A549 (cell line): ENCODE measurements at regions of chr1 and their contacts with region 1.

Region 1: GRCh38 chr1:12619792-12620487 is 1.9 kb upstream of the DHRS3 start:
- DNase-seq: peak; percentile 70 to 86
- ATAC-seq: peak; percentile 62 to 63
- H3K4me3 ChIP-seq: peak overlapping the region; percentile 93
- H3K27ac ChIP-seq: peak overlapping the region; percentile 99 to 100
- H3K4me1 ChIP-seq: peaks cover 22% of the 10 kb centered on the region
- CTCF ChIP-seq: peak; percentile 78
- EP300 ChIP-seq: no peak
- POLR2A ChIP-seq: no peak; the same call in 1 of the 2 replicates
- RAD21 ChIP-seq: peak; percentile 91 to 94

Region 2: GRCh38 chr1:12380326-12381249 is 239.4 kb before region 1 on chr1:
- CTCF ChIA-PET with region 1: no interaction called
- POLR2A ChIA-PET with region 1: interaction called, 10 read pairs
- DNase-seq: peak in 1 of 2 experiments; percentile 32
- ATAC-seq: peak; percentile 68 to 77
- H3K4me3 ChIP-seq: no peak overlapping the region
- H3K27ac ChIP-seq: peak overlapping the region; percentile 70 to 78
- H3K4me1 ChIP-seq: peaks cover 28% of the 10 kb centered on the region
- CTCF ChIP-seq: no peak
- EP300 ChIP-seq: no peak
- POLR2A ChIP-seq: no peak
- RAD21 ChIP-seq: no peak

Region 3: GRCh38 chr1:12467570-12468286 is 152.2 kb before region 1 on chr1:
- CTCF ChIA-PET with region 1: no interaction called
- POLR2A ChIA-PET with region 1: no interaction called
- DNase-seq: no peak
- ATAC-seq: no peak
- H3K4me3 ChIP-seq: no peak overlapping the region
- H3K27ac ChIP-seq: no peak overlapping the region
- H3K4me1 ChIP-seq: peaks cover 2% of the 10 kb centered on the region; the same call in 2 of the 3 replicates
- CTCF ChIP-seq: no peak
- EP300 ChIP-seq: no peak
- POLR2A ChIP-seq: no peak
- RAD21 ChIP-seq: no peak

Region 4: DNA sequence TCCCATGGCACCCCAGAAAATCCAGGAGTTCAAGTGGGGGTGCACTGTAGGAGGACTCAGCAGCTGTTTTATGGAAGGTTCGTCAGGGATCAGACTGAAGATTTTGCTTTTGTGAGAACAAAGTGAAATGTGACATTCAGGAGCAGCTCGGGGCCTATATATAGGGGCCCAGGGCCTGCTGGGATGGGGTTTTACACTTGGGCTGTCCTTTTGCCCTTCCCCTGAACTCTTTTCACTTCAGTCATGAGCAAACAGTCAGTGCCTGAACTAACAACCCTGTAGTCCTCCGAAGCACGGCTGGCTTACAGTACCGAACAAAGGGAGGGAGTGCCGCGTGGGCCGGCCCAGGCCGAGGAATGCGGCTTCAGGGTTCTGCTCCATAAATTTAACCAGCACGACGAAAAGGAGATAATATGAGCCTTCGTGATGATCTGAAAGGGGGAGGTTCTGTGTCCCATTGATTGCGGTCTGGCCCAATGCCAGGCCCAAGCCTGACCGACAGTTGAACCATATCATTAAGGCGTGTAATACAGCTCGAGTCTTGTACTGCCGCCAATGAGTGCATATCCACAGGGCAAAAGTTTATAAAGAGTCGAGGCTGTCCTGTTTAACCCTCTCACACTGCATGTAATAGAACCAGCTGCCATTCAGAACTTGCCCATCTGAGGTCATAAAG is 141.9 kb before region 1 on chr1:
- CTCF ChIA-PET with region 1: interaction called, 3 read pairs
- POLR2A ChIA-PET with region 1: interaction called, 45 read pairs
- DNase-seq: peak; percentile 49 to 97
- ATAC-seq: peak; percentile 87 to 95
- H3K4me3 ChIP-seq: no peak overlapping the region
- H3K27ac ChIP-seq: peak overlapping the region; percentile 92 to 93
- H3K4me1 ChIP-seq: peaks cover 72% of the 10 kb centered on the region
- CTCF ChIP-seq: no peak
- EP300 ChIP-seq: peak; percentile 75 to 96; a peak in 3 of 5 replicates
- POLR2A ChIP-seq: no peak
- RAD21 ChIP-seq: peak; percentile 28 to 66; a peak in 4 of 5 replicates

Region 5: DNA sequence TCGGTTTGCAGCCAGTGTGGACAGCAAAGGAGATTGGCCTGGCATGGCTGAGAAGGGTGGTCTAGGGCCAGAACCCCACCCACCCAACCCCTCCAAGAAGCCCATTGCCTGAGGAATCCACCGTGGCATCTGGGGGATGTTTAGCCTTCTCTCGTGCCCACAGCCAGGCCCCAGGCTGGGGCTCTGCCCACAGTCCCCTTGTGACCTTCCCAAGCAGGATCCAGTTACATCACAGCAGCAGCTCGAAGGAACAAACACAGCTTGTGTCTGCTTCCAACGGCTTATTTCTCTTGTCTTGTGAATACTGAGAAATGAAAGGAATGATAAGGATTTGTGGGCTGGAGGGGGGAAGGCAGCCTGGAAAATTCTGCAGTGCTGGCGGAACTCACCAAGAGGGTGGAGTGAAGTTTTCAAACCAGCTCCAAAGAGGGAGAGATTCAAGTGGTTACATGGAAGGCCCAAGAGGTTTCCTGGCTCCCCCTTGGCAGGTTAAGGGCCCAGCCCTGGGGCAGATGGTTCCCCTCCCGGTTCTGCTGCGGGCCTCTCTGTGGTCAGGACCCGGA is 63.5 kb before region 1 on chr1:
- CTCF ChIA-PET with region 1: no interaction called
- POLR2A ChIA-PET with region 1: no interaction called
- DNase-seq: peak in 1 of 2 experiments; percentile 73
- ATAC-seq: peak; percentile 47 to 73; a peak in 3 of 6 replicates
- H3K4me3 ChIP-seq: no peak overlapping the region
- H3K27ac ChIP-seq: peak overlapping the region; percentile 67 to 84
- H3K4me1 ChIP-seq: peaks cover 28% of the 10 kb centered on the region
- CTCF ChIP-seq: no peak
- EP300 ChIP-seq: no peak
- POLR2A ChIP-seq: no peak
- RAD21 ChIP-seq: no peak

Region 6: DNA sequence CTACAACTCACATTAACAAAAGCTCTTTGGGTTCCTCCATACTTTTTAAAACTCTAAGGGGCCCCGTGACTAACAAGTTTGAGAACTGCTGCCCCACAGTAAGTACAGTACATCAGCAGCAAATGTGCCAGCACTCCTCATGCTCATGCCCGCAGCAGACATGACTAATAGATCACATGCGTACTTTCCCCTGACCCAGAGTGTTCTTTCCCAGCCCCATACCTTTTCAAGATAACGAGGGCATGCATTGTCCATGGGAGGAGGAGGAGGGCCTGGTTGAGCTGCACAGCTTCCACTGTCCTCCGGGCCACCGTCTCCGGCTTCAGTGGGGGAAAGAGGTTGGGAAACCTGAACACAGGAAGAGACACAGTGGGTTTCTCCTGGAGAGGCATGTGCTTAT is 47.4 kb before region 1 on chr1:
- CTCF ChIA-PET with region 1: interaction called, 8 read pairs
- POLR2A ChIA-PET with region 1: interaction called, 30 read pairs
- DNase-seq: no peak
- ATAC-seq: peak in 1 of 2 experiments; percentile 14; a peak in 3 of 6 replicates
- H3K4me3 ChIP-seq: no peak overlapping the region
- H3K27ac ChIP-seq: peak overlapping the region; percentile 84 to 93
- H3K4me1 ChIP-seq: peaks cover 48% of the 10 kb centered on the region
- CTCF ChIP-seq: no peak
- EP300 ChIP-seq: no peak
- POLR2A ChIP-seq: no peak
- RAD21 ChIP-seq: no peak

Region 7: DNA sequence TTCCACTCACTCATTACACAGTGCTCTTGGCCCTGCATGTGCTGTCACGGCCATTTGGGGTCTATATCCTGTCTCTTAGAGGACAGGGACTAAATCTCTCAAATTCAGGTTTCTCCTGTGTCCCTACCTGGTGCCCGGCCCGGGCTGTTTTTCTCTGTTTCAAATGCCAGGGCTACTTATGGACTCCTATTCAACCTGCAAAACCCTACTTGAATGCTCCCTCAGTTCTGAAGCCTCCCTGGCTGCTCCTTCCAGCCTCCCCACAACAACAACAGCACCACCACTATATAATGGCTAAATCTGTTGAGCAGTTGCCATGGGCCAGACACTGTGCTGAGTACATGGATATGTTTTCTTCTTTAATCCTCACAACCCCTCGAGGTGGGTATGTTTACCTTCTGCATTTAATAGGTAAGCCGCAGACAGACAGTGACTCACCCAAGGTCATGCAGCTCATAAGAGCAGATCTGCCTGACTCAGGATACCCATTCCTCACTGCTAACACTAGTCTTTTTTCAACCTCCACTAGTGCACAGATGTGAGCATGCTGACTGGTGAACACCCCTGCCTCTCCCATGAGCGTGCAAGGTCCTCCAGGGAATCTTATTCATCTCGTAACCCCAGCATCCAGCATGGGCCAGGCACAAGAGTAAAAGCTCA is 31.8 kb before region 1 on chr1:
- CTCF ChIA-PET with region 1: interaction called, 5 read pairs
- POLR2A ChIA-PET with region 1: interaction called, 209 read pairs
- DNase-seq: peak; percentile 38 to 84
- ATAC-seq: peak; percentile 72 to 73
- H3K4me3 ChIP-seq: no peak overlapping the region
- H3K27ac ChIP-seq: peak overlapping the region; percentile 90 to 100
- H3K4me1 ChIP-seq: peaks cover 65% of the 10 kb centered on the region
- CTCF ChIP-seq: no peak
- EP300 ChIP-seq: peak; percentile 51 to 63; a peak in 2 of 5 replicates
- POLR2A ChIP-seq: no peak
- RAD21 ChIP-seq: no peak; a peak in 2 of 5 replicates

Region 8: GRCh38 chr1:12604114-12604874 is 15.6 kb before region 1 on chr1:
- CTCF ChIA-PET with region 1: interaction called, 17 read pairs
- POLR2A ChIA-PET with region 1: interaction called, 209 read pairs
- DNase-seq: peak; percentile 86 to 94
- ATAC-seq: peak; percentile 75 to 78
- H3K4me3 ChIP-seq: no peak overlapping the region
- H3K27ac ChIP-seq: peak overlapping the region; percentile 97 to 100
- H3K4me1 ChIP-seq: peaks cover 77% of the 10 kb centered on the region
- CTCF ChIP-seq: no peak
- EP300 ChIP-seq: peak; percentile 88 to 89; a peak in 4 of 5 replicates
- POLR2A ChIP-seq: no peak
- RAD21 ChIP-seq: peak in 1 of 2 experiments; percentile 37; a peak in 2 of 5 replicates

Region 9: GRCh38 chr1:12636098-12636950 is 16.4 kb after region 1 on chr1:
- CTCF ChIA-PET with region 1: no interaction called
- POLR2A ChIA-PET with region 1: no interaction called
- DNase-seq: no peak
- ATAC-seq: peak; percentile 59 to 90
- H3K4me3 ChIP-seq: no peak overlapping the region
- H3K27ac ChIP-seq: peak overlapping the region in 1 of 2 experiments; percentile 39; a peak in 3 of 6 replicates
- H3K4me1 ChIP-seq: peaks cover 5% of the 10 kb centered on the region; the same call in 1 of the 3 replicates
- CTCF ChIP-seq: no peak
- EP300 ChIP-seq: no peak
- POLR2A ChIP-seq: no peak
- RAD21 ChIP-seq: no peak

Region 10: GRCh38 chr1:12690156-12690555 is 70.2 kb after region 1 on chr1:
- CTCF ChIA-PET with region 1: no interaction called
- POLR2A ChIA-PET with region 1: no interaction called
- DNase-seq: no peak
- ATAC-seq: no peak
- H3K4me3 ChIP-seq: no peak overlapping the region
- H3K27ac ChIP-seq: no peak overlapping the region
- H3K4me1 ChIP-seq: no peaks in the 10 kb centered on the region
- CTCF ChIP-seq: no peak
- EP300 ChIP-seq: no peak
- POLR2A ChIP-seq: no peak
- RAD21 ChIP-seq: no peak